Transverse colon (tissue), 4 donors: ENCODE measurements at regions of chr12 and their contacts with region 1.

Region 1: GRCh38 chr12:105420659-105421240 is 90.3 kb downstream of the C12orf75 start:
- DNase-seq: peak; percentile 76
- H3K4me3 ChIP-seq: no peak overlapping the region
- H3K27ac ChIP-seq: no peak overlapping the region
- H3K4me1 ChIP-seq: no peaks in the 10 kb centered on the region
- H3K27me3 ChIP-seq: no peaks in the 10 kb centered on the region
- CTCF ChIP-seq: peak; percentile 84 to 91 (median 90)
- EP300 ChIP-seq: no peak
- POLR2A ChIP-seq: no peak

Region 2: GRCh38 chr12:105190530-105190929 is 230.2 kb before region 1 on chr12:
- in situ Hi-C with region 1: no loop called
- intact Hi-C with region 1: no loop called
- DNase-seq: no peak
- H3K4me3 ChIP-seq: no peak overlapping the region
- H3K27ac ChIP-seq: no peak overlapping the region
- H3K4me1 ChIP-seq: no peaks in the 10 kb centered on the region
- H3K27me3 ChIP-seq: no peaks in the 10 kb centered on the region
- CTCF ChIP-seq: no peak
- EP300 ChIP-seq: no peak
- POLR2A ChIP-seq: no peak

Region 3: DNA sequence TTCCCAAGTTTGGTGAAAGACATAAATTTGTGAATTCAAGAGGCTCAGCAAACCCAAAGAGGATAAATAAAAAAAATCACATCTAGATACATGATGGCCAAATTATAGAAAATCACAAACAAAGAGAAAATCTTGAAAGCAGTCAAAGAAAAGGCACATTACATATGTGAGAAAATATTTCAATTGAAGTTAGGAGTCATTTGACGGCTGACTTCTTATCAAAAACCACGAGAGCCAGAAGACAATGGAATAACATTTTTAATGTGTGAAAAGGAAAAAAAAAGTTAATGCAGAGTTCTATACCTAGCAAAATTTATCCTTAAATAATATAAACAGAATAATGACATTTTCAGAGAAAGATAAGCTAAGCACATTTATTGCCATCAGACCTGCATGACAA is 216.7 kb after region 1 on chr12:
- in situ Hi-C with region 1: no loop called
- intact Hi-C with region 1: no loop called
- DNase-seq: no peak
- H3K4me3 ChIP-seq: no peak overlapping the region
- H3K27ac ChIP-seq: no peak overlapping the region
- H3K4me1 ChIP-seq: no peaks in the 10 kb centered on the region
- H3K27me3 ChIP-seq: no peaks in the 10 kb centered on the region
- CTCF ChIP-seq: no peak
- EP300 ChIP-seq: no peak
- POLR2A ChIP-seq: no peak

Region 4: GRCh38 chr12:106136263-106136662 is 715.5 kb after region 1 on chr12:
- in situ Hi-C with region 1: loop called in 3 of 4 experiments (anchors 10 kb)
- intact Hi-C with region 1: loop called (anchors 1 kb)
- DNase-seq: peak; percentile 86
- H3K4me3 ChIP-seq: peak overlapping the region in 1 of 4 donors; percentile 17
- H3K27ac ChIP-seq: peak overlapping the region; percentile 8 to 90 (median 72)
- H3K4me1 ChIP-seq: peaks cover 0 to 41% (median 11%) of the 10 kb centered on the region in 4 donors
- H3K27me3 ChIP-seq: peaks cover 35% of the 10 kb centered on the region
- CTCF ChIP-seq: peak; percentile 74 to 87 (median 82)
- EP300 ChIP-seq: no peak
- POLR2A ChIP-seq: no peak

Region 5: DNA sequence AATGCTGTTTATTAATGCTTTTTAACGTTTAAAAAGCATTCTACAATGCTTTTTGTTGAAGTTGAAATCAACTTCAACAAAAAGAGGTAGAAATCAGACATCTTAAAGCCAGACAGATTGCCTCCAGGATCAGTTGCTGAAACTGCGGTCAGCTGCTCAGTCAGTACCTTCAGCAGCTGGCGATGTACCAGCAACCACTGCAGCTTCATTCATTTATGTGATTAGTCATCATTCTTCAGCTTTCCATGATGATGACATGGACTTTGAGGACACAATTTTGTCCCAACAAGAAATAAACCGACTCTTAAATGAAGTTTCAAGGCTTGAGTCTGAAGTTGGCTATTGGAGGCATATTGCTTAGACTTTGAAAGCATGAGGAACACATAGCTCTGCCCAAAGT is 749.5 kb after region 1 on chr12:
- in situ Hi-C with region 1: loop called in 1 of 4 experiments (anchors 25 kb)
- intact Hi-C with region 1: no loop called
- DNase-seq: no peak
- H3K4me3 ChIP-seq: no peak overlapping the region
- H3K27ac ChIP-seq: no peak overlapping the region
- H3K4me1 ChIP-seq: peaks cover 0 to 4% (median 0%) of the 10 kb centered on the region in 4 donors
- H3K27me3 ChIP-seq: no peaks in the 10 kb centered on the region
- CTCF ChIP-seq: no peak
- EP300 ChIP-seq: no peak
- POLR2A ChIP-seq: no peak

Region 6: GRCh38 chr12:106211973-106212372 is 791.2 kb after region 1 on chr12:
- in situ Hi-C with region 1: loop called in 1 of 4 experiments (anchors 10 kb)
- intact Hi-C with region 1: no loop called
- DNase-seq: no peak
- H3K4me3 ChIP-seq: no peak overlapping the region
- H3K27ac ChIP-seq: no peak overlapping the region
- H3K4me1 ChIP-seq: no peaks in the 10 kb centered on the region
- H3K27me3 ChIP-seq: peaks cover 19% of the 10 kb centered on the region
- CTCF ChIP-seq: no peak
- EP300 ChIP-seq: no peak
- POLR2A ChIP-seq: no peak